OCI-LY7 (cell line): ENCODE measurements at regions of chr2 and their contacts with region 1.

Region 1: DNA sequence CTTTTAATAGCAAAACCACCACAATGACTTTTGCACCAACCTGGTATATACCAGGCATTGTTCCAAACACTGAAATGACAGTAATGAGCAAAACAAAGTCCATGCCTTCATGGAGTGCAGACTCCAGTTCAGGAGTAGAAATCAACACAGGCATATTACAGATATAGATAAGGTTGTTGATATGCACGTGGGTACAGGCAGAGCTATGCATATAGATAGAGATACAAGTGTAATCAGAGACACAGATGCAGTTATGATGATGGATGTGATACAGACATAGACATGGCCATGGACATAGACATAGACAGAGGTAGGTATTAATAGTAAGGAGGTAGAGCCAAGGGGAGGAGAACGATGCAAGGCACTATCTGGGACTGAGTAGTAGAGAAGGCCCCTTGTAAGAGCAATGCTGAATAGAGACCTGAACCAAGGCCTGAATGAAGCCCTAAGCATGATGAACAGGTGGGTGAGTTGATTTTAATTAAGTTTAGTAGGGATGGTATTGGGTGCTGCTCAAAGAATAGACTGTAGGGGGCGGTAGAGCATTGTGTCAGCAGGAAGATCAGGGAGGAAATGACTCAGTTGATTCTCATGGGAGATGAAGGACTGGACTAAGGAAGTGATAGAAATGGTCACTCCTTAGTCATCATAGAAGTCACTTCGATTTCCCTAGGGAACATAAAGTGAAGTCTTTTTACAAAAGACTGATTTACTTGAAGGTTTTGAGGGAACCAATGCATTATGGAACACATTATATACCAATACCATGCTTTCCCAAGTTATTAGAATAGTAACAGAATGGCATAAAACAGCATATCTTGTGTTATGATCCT is 39.4 kb downstream of the CMPK2 start:
- DNase-seq: peak; percentile 64
- H3K4me3 ChIP-seq: no peak overlapping the region
- H3K27ac ChIP-seq: no peak overlapping the region
- H3K4me1 ChIP-seq: peaks cover 25% of the 10 kb centered on the region
- CTCF ChIP-seq: peak; percentile 87

Region 2: GRCh38 chr2:6352906-6353515 is 473.3 kb before region 1 on chr2:
- CTCF ChIA-PET with region 1: no interaction called
- POLR2A ChIA-PET with region 1: no interaction called
- intact Hi-C with region 1: loop called (anchors 5 kb)
- DNase-seq: peak; percentile 18
- H3K4me3 ChIP-seq: peak overlapping the region; percentile 28
- H3K27ac ChIP-seq: peak overlapping the region; percentile 90
- H3K4me1 ChIP-seq: peaks cover 91% of the 10 kb centered on the region
- CTCF ChIP-seq: peak; percentile 50; the same call in 1 of the 2 replicates

Region 3: GRCh38 chr2:6667326-6667725 is 159.0 kb before region 1 on chr2:
- CTCF ChIA-PET with region 1: no interaction called
- POLR2A ChIA-PET with region 1: no interaction called
- intact Hi-C with region 1: loop called (anchors 10 kb)
- DNase-seq: no peak
- H3K4me3 ChIP-seq: no peak overlapping the region
- H3K27ac ChIP-seq: no peak overlapping the region
- H3K4me1 ChIP-seq: no peaks in the 10 kb centered on the region
- CTCF ChIP-seq: no peak

Region 4: GRCh38 chr2:6773007-6773693 is 53.1 kb before region 1 on chr2:
- CTCF ChIA-PET with region 1: no interaction called
- POLR2A ChIA-PET with region 1: interaction called, 12 read pairs
- intact Hi-C with region 1: loop called (anchors 2 kb)
- DNase-seq: peak; percentile 78
- H3K4me3 ChIP-seq: peak overlapping the region; percentile 54
- H3K27ac ChIP-seq: peak overlapping the region; percentile 24
- H3K4me1 ChIP-seq: peaks cover 46% of the 10 kb centered on the region
- CTCF ChIP-seq: peak; percentile 98

Region 5: DNA sequence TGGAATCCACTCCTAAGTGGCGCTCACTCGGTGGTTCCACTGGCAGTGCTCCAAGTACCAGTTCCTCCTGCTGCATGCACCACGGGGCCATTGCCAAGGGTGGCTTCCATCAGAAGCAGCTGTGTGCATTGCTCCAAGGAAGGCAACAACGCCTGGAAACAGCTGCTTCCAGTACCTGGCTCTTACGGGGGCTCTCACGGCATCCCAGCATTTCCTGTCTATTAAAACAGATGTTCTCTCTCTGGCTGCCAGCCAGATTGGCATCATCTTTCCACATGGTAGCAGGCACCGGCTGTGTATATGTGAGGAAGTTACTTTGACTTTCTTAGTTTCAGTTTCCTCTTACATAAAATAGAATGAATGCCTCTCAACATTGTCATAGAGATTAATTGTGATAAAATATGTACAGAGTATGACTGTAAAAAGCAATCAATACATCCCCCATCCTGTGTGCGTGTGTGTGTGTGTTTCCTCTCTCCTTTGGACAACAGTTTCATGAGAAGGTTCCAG is 45.5 kb before region 1 on chr2:
- CTCF ChIA-PET with region 1: no interaction called
- POLR2A ChIA-PET with region 1: interaction called, 12 read pairs
- intact Hi-C with region 1: no loop called
- DNase-seq: peak; percentile 89
- H3K4me3 ChIP-seq: peak overlapping the region; percentile 42
- H3K27ac ChIP-seq: peak overlapping the region; percentile 58
- H3K4me1 ChIP-seq: peaks cover 49% of the 10 kb centered on the region
- CTCF ChIP-seq: no peak

Region 6: GRCh38 chr2:6791679-6792078 is 34.6 kb before region 1 on chr2:
- CTCF ChIA-PET with region 1: interaction called, 3 read pairs
- POLR2A ChIA-PET with region 1: interaction called, 4 read pairs
- intact Hi-C with region 1: loop called (anchors 2 kb)
- DNase-seq: peak; percentile 34
- H3K4me3 ChIP-seq: no peak overlapping the region
- H3K27ac ChIP-seq: no peak overlapping the region
- H3K4me1 ChIP-seq: no peaks in the 10 kb centered on the region
- CTCF ChIP-seq: peak; percentile 63

Region 7: DNA sequence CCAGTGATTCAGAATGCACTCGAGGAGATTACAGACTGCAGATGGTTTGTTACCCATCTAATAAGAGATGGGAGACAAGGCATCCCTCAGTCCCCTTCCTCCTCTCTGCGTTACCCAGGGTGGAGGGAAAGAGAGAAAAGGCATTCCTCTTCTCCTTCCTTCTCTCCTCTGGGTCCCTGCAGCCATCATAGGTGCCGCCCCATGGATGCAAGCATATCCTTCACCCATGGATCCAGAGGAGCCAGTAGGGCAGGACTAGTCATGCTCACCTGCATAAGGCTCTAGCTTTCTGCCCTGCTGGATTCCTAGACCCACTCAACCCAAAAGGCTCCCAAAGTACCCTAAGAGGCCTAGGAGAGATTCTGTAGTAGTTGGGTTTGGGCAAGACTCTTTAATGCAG is 19.0 kb after region 1 on chr2:
- CTCF ChIA-PET with region 1: no interaction called
- POLR2A ChIA-PET with region 1: no interaction called
- intact Hi-C with region 1: no loop called
- DNase-seq: peak; percentile 61
- H3K4me3 ChIP-seq: no peak overlapping the region
- H3K27ac ChIP-seq: no peak overlapping the region
- H3K4me1 ChIP-seq: no peaks in the 10 kb centered on the region
- CTCF ChIP-seq: no peak